Activated CD8-positive, alpha-beta T cell treated with anti-CD3 and anti-CD28 coated beads for 36 hours (primary cell): ENCODE measurements at regions of chr2 and their contacts with region 1.

Region 1: DNA sequence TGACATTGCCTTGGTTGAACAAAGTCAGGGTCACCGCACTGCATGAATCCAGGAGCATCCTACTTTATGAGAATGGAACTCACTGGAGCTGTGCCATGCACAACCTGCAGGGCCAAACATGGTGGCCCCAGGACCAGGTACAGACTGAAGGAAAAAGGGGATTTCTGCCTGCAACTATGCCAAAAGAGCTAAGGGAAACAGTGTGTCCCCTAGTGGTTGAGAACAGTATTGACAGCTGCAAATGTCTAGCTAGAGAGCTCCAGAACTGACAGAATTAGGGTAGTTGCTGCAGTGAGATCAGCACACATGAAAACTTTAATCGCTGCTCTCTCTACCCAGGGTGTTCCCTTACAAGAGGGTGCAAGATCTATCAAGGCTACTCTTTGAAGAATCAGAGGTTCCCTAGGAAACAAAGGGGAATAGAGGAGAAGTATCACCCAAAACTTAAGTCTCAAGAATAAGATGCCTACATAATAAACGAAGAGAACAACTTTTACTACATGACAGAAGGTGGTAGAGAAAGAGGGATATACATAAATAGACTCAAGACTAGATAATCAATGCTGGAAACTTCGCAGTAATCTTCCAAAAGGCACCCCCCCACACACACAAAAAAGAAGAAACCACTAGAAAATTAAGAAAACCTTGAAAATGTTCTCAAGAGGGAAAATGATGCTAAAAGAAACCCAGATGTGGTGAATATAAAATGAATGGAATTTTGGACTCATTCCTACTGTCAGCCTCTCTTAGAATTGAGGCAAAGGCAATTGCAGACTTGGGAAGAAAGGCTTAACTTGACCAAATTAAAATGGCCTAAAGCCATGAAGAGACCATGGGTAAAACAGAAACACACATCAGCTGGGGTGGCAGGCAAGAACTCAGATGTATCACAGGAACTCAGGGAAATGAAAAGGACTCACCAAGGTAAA is 43.6 kb upstream of the IHH start:
- DNase-seq: peak; percentile 30
- ATAC-seq: peak; percentile 90
- H3K4me3 Mint-ChIP-seq: no peak overlapping the region
- H3K27ac Mint-ChIP-seq: peak overlapping the region; percentile 28
- H3K4me1 Mint-ChIP-seq: peaks cover 32% of the 10 kb centered on the region
- H3K27me3 Mint-ChIP-seq: no peaks in the 10 kb centered on the region
- CTCF ChIP-seq: peak; percentile 82

Region 2: GRCh38 chr2:218927422-218927821 is 176.9 kb before region 1 on chr2:
- CTCF ChIA-PET with region 1: no interaction called
- POLR2A ChIA-PET with region 1: no interaction called
- intact Hi-C with region 1: no loop called
- DNase-seq: no peak
- ATAC-seq: no peak
- H3K4me3 Mint-ChIP-seq: no peak overlapping the region
- H3K27ac Mint-ChIP-seq: no peak overlapping the region
- H3K4me1 Mint-ChIP-seq: no peaks in the 10 kb centered on the region
- H3K27me3 Mint-ChIP-seq: peaks cover 24% of the 10 kb centered on the region
- CTCF ChIP-seq: no peak

Region 3: GRCh38 chr2:219087361-219087760 is 17.0 kb before region 1 on chr2:
- CTCF ChIA-PET with region 1: interaction called, 20 read pairs
- POLR2A ChIA-PET with region 1: no interaction called
- intact Hi-C with region 1: no loop called
- DNase-seq: no peak
- ATAC-seq: no peak
- H3K4me3 Mint-ChIP-seq: no peak overlapping the region
- H3K27ac Mint-ChIP-seq: no peak overlapping the region
- H3K4me1 Mint-ChIP-seq: peaks cover 14% of the 10 kb centered on the region
- H3K27me3 Mint-ChIP-seq: no peaks in the 10 kb centered on the region
- CTCF ChIP-seq: no peak